IMR-90 (cell line): ENCODE measurements at regions of chr1 and their contacts with region 1.

Region 1: GRCh38 chr1:156641761-156642264 is at the start of gene BCAN:
- DNase-seq: peak; percentile 19
- ATAC-seq: peak; percentile 72
- H3K4me3 ChIP-seq: no peak within 1 kb of the TSS; the same call in 1 of the 2 replicates
- H3K27ac ChIP-seq: no peak within 1 kb of the TSS
- H3K4me1 ChIP-seq: no peaks in the 10 kb centered on the region; the same call in 1 of the 2 replicates
- H3K27me3 ChIP-seq: peaks cover 92% of the 10 kb centered on the region
- CTCF ChIP-seq: no peak
- POLR2A ChIP-seq: no peak
- RAD21 ChIP-seq: no peak
- total RNA-seq, gene BCAN: not detected in 2 replicates

Region 2: DNA sequence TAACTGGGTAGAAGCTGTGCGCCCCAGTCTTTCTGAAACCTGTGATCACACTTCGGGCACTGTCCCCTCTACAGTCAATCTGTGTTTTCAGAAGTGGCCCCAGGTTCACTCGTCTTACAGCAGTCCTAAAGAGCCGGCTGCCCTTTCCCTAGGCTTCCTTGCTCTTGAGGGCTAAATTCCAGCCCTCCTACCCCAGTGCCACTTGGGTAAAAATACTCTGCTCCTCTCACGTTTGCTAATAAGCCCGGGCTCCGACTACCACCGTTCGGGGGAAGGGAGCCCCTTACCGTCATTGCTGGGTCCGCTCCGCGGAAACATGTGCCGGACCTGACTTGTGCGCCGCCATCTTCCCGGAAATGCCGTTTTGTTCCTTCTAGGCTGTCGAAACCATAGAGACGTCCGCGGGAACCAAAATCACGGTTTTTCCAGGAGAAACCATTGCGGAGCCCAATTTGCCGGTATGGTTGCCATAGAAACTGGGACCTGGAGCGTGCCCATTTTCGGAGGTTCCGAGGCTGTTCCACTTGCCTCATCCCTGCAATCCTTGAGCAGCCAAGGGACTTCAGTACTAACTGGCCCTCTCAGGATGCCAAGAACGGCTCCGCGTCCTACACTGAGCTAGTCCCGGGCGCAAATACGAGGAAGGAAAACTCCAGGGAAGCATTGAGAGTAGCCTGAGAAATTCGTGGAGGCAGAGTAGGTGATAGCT is 40.5 kb before region 1 on chr1 and contains the start of gene GPATCH4:
- CTCF ChIA-PET with region 1: no interaction called
- POLR2A ChIA-PET with region 1: interaction called, 14 read pairs
- dilution Hi-C with region 1: no loop called
- in situ Hi-C with region 1: no loop called
- intact Hi-C with region 1: no loop called
- DNase-seq: peak; percentile 92
- ATAC-seq: peak; percentile 95
- H3K4me3 ChIP-seq: peak within 1 kb of the TSS; percentile 78
- H3K27ac ChIP-seq: peak within 1 kb of the TSS; percentile 54
- H3K4me1 ChIP-seq: 0 out of 2 replicates have a peak, but pooled peaks cover 4% of the 10 kb centered on the region
- H3K27me3 ChIP-seq: no peaks in the 10 kb centered on the region
- CTCF ChIP-seq: no peak
- POLR2A ChIP-seq: peak; percentile 86
- RAD21 ChIP-seq: no peak
- total RNA-seq, gene GPATCH4: 30.8 and 41.8 TPM in 2 replicates

Region 3: DNA sequence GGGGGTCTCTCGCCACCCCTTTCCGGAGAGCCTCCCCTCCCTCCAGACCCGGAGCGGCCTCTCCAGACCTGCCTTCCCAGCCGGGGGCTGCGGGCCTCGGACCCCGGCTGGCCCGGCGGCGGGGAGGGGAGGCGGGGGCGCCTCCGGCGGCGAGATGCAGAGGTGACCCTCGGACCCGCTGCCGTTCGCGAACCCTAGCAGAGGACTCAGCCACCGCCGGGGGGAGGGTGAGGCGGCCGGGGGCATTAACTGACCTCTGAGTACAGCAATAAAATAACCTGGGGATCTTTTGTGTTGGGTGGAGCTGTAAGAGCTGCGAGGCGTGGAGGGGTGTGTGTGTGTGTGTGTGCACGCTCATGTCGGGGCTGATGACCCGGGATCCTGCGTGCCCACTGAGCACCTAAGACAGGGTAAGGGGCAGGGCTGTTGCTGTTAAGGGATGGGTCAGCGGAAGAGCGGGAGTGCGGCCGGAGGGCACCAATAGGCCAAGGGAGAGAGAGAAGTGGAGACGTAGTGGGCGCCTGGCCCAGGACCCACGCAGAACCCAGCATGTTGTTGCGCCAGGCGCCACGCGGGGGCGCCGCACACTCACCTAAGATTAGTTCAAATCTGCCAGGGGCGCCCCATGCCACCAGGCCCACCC is 16.3 kb before region 1 on chr1:
- CTCF ChIA-PET with region 1: interaction called, 14 read pairs
- POLR2A ChIA-PET with region 1: no interaction called
- dilution Hi-C with region 1: no loop called
- in situ Hi-C with region 1: no loop called
- intact Hi-C with region 1: no loop called
- DNase-seq: peak; percentile 28
- ATAC-seq: peak; percentile 71
- H3K4me3 ChIP-seq: no peak overlapping the region
- H3K27ac ChIP-seq: no peak overlapping the region
- H3K4me1 ChIP-seq: peaks cover 4% of the 10 kb centered on the region
- H3K27me3 ChIP-seq: peaks cover 54% of the 10 kb centered on the region
- CTCF ChIP-seq: peak; percentile 68
- POLR2A ChIP-seq: no peak
- RAD21 ChIP-seq: peak; percentile 65

Region 4: GRCh38 chr1:156911577-156912298 is 269.9 kb after region 1 on chr1:
- CTCF ChIA-PET with region 1: no interaction called
- POLR2A ChIA-PET with region 1: interaction called, 13 read pairs
- dilution Hi-C with region 1: no loop called
- in situ Hi-C with region 1: no loop called
- intact Hi-C with region 1: no loop called
- DNase-seq: no peak
- ATAC-seq: no peak
- H3K4me3 ChIP-seq: no peak overlapping the region
- H3K27ac ChIP-seq: no peak overlapping the region
- H3K4me1 ChIP-seq: peaks cover 17% of the 10 kb centered on the region
- H3K27me3 ChIP-seq: no peaks in the 10 kb centered on the region
- CTCF ChIP-seq: no peak
- POLR2A ChIP-seq: no peak
- RAD21 ChIP-seq: no peak

Region 5: GRCh38 chr1:157105988-157106812 is 464.4 kb after region 1 on chr1:
- CTCF ChIA-PET with region 1: no interaction called
- POLR2A ChIA-PET with region 1: no interaction called
- dilution Hi-C with region 1: no loop called
- in situ Hi-C with region 1: no loop called
- intact Hi-C with region 1: no loop called
- DNase-seq: peak; percentile 97
- ATAC-seq: peak; percentile 93
- H3K4me3 ChIP-seq: no peak overlapping the region
- H3K27ac ChIP-seq: peak overlapping the region; percentile 80
- H3K4me1 ChIP-seq: peaks cover 10% of the 10 kb centered on the region
- H3K27me3 ChIP-seq: no peaks in the 10 kb centered on the region; the same call in 1 of the 2 replicates
- CTCF ChIP-seq: no peak
- POLR2A ChIP-seq: no peak
- RAD21 ChIP-seq: no peak